ENCODE measurements at regions of chrX and their contacts with region 1.

Region 1: DNA sequence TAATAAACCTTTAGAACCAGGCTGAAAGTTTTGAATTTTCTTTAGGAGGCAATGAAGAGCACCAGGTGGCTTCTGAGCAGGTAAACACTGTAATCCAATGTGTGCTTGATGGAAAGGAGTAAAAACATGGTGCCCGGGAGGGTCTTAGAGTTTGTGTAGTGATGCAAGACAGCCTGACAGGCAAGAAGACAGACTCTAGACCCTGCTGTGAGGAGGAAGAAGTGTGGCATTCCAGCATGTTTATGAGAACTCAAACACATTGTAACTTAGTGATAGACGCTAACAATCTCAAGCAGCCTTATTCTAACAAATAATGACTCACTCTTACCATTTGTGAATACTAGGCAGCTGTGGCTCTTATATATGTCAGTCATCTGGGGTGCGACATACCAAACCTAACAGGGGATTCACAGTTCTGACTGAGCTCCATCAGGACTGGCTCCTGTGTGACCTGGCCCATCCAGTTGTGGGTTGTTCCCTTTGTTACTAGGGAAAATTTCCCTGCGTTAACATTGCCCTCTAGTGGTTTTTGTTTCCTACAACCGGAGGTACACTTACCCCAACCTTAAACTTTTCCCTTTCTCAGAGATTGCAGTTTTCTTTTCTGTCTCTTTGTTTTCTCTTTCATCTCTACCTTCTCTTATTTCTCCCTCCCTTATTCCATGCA is 53.8 kb downstream of the VSIG4 start:
- DNase-seq: no peak
- H3K4me3 ChIP-seq: no peak overlapping the region
- H3K27ac ChIP-seq: peak overlapping the region in 2 of 4 donors; percentile 13 to 21
- H3K4me1 ChIP-seq: no peaks in the 10 kb centered on the region
- H3K27me3 ChIP-seq: no peaks in the 10 kb centered on the region
- CTCF ChIP-seq: peak; percentile 36 to 67 (median 56)
- POLR2A ChIP-seq: no peak

Region 2: GRCh38 chrX:65581661-65582339 is 404.3 kb before region 1 on chrX:
- intact Hi-C with region 1: loop called (anchors 5 kb)
- DNase-seq: no peak
- H3K4me3 ChIP-seq: no peak overlapping the region
- H3K27ac ChIP-seq: no peak overlapping the region
- H3K4me1 ChIP-seq: no peaks in the 10 kb centered on the region
- H3K27me3 ChIP-seq: no peaks in the 10 kb centered on the region
- CTCF ChIP-seq: peak in 5 of 6 experiments; percentile 58 to 85 (median 76)
- POLR2A ChIP-seq: no peak

Region 3: GRCh38 chrX:65745992-65746391 is 240.1 kb before region 1 on chrX:
- intact Hi-C with region 1: loop called (anchors 10 kb)
- DNase-seq: no peak
- H3K4me3 ChIP-seq: no peak overlapping the region
- H3K27ac ChIP-seq: no peak overlapping the region
- H3K4me1 ChIP-seq: peaks cover 0 to 10% (median 0%) of the 10 kb centered on the region in 3 donors
- H3K27me3 ChIP-seq: no peaks in the 10 kb centered on the region
- CTCF ChIP-seq: peak in 3 of 6 experiments; percentile 8 to 40 (median 12)
- POLR2A ChIP-seq: no peak